Heart left ventricle (tissue), 16 donors: ENCODE measurements at regions of chr2 and their contacts with region 1.

Region 1: GRCh38 chr2:26852405-26853306 is 4.7 kb downstream of the DPYSL5 start:
- DNase-seq: peak in 3 of 5 donors; percentile 26 to 61 (median 43)
- ATAC-seq: peak; percentile 42 to 92 (median 87)
- H3K4me3 ChIP-seq: no peak overlapping the region
- H3K27ac ChIP-seq: no peak overlapping the region
- H3K4me1 ChIP-seq: peaks cover 7 to 33% (median 23%) of the 10 kb centered on the region in 12 donors
- H3K27me3 ChIP-seq: peaks cover 25 to 60% (median 36%) of the 10 kb centered on the region in 9 donors
- CTCF ChIP-seq: no peak
- POLR2A ChIP-seq: no peak

Region 2: GRCh38 chr2:26292665-26293064 is 560.0 kb before region 1 on chr2:
- intact Hi-C with region 1: no loop called
- DNase-seq: no peak
- ATAC-seq: peak in 2 of 4 donors; percentile 13 to 40
- H3K4me3 ChIP-seq: no peak overlapping the region
- H3K27ac ChIP-seq: no peak overlapping the region
- H3K4me1 ChIP-seq: peaks cover 0 to 4% (median 0%) of the 10 kb centered on the region in 12 donors
- H3K27me3 ChIP-seq: no peaks in the 10 kb centered on the region
- CTCF ChIP-seq: no peak
- POLR2A ChIP-seq: no peak

Region 3: DNA sequence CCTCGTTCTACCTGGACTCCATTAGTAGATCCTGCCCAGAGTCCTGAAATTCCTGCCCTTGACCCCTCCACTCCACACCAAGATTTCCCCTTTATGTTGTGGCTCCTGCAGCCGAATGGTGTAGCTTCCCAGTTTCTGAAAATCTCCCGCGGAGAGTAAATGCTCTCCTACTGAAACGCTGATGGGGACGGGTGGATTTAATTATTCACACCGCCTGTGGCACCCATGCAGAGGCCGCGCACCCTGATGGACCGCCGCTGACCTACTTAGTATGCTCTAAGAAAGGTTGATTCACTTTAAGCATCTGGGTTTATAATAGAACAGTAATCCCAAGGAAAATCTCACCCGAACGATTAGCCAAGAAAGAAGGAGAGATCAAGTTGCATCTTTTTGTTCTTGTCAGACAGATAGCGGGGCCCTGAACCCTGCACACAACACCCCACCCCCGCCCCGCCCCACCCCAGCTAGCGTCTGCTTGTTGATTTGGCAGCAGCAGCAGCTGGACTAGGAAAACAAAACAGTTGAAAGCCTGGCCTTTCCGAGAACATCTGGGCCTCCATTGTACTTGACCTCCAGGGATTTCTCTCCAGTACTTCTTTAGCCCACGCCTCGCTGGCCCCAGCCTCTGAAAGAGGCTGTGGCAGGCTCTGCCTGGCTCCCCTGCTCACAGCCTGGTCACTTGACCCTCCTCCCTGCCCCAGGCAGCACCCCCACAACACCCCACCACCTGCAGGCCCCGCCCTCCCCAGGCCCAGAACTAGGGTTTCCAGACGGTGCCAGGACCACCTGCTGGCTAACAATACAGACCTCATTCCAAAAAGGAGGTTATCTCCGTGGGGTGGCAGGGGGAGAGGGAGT is 48.9 kb after region 1 on chr2:
- intact Hi-C with region 1: loop called in 1 of 10 experiments (anchors 10 kb)
- DNase-seq: peak in 1 of 5 donors; percentile 62
- ATAC-seq: peak in 3 of 4 donors; percentile 54 to 72 (median 68)
- H3K4me3 ChIP-seq: no peak overlapping the region
- H3K27ac ChIP-seq: no peak overlapping the region
- H3K4me1 ChIP-seq: peaks cover 0 to 4% (median 0%) of the 10 kb centered on the region in 12 donors
- H3K27me3 ChIP-seq: no peaks in the 10 kb centered on the region
- CTCF ChIP-seq: no peak
- POLR2A ChIP-seq: no peak